ENCODE measurements at regions of chr17 and their contacts with region 1.

Region 1: GRCh38 chr17:51228161-51228560 is 31.7 kb downstream of the MBTD1 start:
- DNase-seq: no peak
- ATAC-seq: no peak
- H3K4me3 ChIP-seq: no peak overlapping the region
- H3K27ac ChIP-seq: no peak overlapping the region
- H3K4me1 ChIP-seq: no peaks in the 10 kb centered on the region
- H3K27me3 ChIP-seq: no peaks in the 10 kb centered on the region
- CTCF ChIP-seq: no peak

Region 2: GRCh38 chr17:50501054-50501453 is 727.1 kb before region 1 on chr17:
- CTCF ChIA-PET with region 1: no interaction called
- POLR2A ChIA-PET with region 1: interaction called, 12 read pairs
- in situ Hi-C with region 1: no loop called
- intact Hi-C with region 1: no loop called
- DNase-seq: no peak
- ATAC-seq: no peak
- H3K4me3 ChIP-seq: no peak overlapping the region
- H3K27ac ChIP-seq: no peak overlapping the region
- H3K4me1 ChIP-seq: no peaks in the 10 kb centered on the region
- H3K27me3 ChIP-seq: no peaks in the 10 kb centered on the region
- CTCF ChIP-seq: peak; percentile 79

Region 3: GRCh38 chr17:51071556-51071955 is 156.6 kb before region 1 on chr17:
- CTCF ChIA-PET with region 1: no interaction called
- POLR2A ChIA-PET with region 1: no interaction called
- in situ Hi-C with region 1: no loop called
- intact Hi-C with region 1: no loop called
- DNase-seq: no peak
- ATAC-seq: no peak
- H3K4me3 ChIP-seq: no peak overlapping the region
- H3K27ac ChIP-seq: no peak overlapping the region
- H3K4me1 ChIP-seq: no peaks in the 10 kb centered on the region
- H3K27me3 ChIP-seq: no peaks in the 10 kb centered on the region
- CTCF ChIP-seq: no peak

Region 4: DNA sequence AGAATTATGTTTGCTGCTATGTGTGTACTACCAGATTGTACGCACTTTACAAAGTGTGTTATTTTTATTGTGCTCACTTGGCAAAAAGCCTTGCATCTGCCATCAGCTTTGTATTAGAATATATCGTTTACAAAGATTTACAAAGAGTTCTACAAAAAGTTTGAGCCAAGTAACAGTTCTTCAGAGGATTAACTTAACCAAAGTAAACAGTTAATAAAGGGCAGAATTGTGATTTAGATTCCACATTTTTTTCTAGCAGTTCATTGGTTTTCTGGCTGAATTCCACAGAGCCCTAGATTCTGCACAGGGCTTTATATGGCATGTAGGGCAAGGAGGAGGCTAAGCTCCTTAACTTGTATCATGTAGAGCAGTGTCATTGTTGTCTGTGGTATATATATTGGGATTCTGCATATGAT is 61.5 kb after region 1 on chr17:
- CTCF ChIA-PET with region 1: no interaction called
- POLR2A ChIA-PET with region 1: no interaction called
- in situ Hi-C with region 1: no loop called
- intact Hi-C with region 1: no loop called
- DNase-seq: no peak
- ATAC-seq: no peak
- H3K4me3 ChIP-seq: no peak overlapping the region
- H3K27ac ChIP-seq: no peak overlapping the region
- H3K4me1 ChIP-seq: no peaks in the 10 kb centered on the region
- H3K27me3 ChIP-seq: no peaks in the 10 kb centered on the region
- CTCF ChIP-seq: no peak